Activated CD4-positive, alpha-beta T cell treated with anti-CD3 and anti-CD28 coated beads, Interleukin-2, amount 10 ng/mL, durations not matched to agents 7 days and 5 days (primary cell): ENCODE measurements at regions of chrX and their contacts with region 1.

Region 1: DNA sequence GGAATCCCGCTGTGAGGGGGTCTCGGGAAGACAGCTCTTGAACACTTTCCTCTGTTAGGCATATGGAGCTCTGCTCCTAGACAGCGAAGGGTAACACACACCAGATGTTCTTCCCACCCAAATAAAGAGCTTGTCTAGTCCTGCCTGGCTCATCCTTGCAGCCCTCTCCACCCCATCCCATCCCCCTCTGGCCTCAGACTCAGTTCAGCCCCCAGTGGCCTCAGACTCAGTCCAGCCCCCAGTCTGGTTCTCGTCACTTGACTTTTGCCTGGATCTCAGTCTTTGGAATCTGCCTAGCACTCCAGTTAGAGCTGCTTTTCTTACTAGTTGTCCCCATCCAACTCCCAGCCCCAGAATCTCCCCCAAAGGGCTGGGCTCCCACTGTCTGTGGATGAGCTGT is 14.9 kb downstream of the RAB33A start:
- DNase-seq: no peak
- H3K4me3 Mint-ChIP-seq: no peak overlapping the region
- H3K27ac Mint-ChIP-seq: peak overlapping the region; percentile 62
- H3K4me1 Mint-ChIP-seq: peaks cover 26% of the 10 kb centered on the region
- H3K27me3 Mint-ChIP-seq: no peaks in the 10 kb centered on the region

Region 2: DNA sequence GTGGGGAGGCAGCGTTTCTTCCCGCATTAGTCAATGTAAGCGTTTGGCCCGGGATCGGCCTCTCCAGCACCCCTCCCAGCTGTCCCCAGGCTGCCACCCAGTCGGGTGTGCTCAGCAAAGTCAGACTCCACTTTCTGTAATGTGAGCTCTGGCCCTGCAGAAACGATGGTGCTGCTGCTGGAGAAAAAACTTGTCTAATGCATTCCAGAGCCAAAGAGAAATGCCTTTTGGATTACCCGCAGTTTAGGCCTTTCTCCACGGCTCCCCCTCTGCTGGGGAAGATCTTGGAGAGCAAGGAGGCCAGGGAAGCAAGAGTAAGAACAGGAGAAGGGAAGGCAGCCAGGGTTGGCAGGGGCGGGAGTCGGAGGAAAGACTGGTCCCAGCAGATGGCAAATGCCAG is 131.5 kb before region 1 on chrX:
- CTCF ChIA-PET with region 1: no interaction called
- POLR2A ChIA-PET with region 1: no interaction called
- DNase-seq: no peak
- H3K4me3 Mint-ChIP-seq: no peak overlapping the region
- H3K27ac Mint-ChIP-seq: peak overlapping the region; percentile 79
- H3K4me1 Mint-ChIP-seq: peaks cover 3% of the 10 kb centered on the region
- H3K27me3 Mint-ChIP-seq: no peaks in the 10 kb centered on the region

Region 3: GRCh38 chrX:130079824-130080406 is 106.7 kb before region 1 on chrX:
- CTCF ChIA-PET with region 1: interaction called, 17 read pairs
- POLR2A ChIA-PET with region 1: no interaction called
- DNase-seq: peak; percentile 63
- H3K4me3 Mint-ChIP-seq: no peak overlapping the region
- H3K27ac Mint-ChIP-seq: peak overlapping the region; percentile 72
- H3K4me1 Mint-ChIP-seq: peaks cover 49% of the 10 kb centered on the region
- H3K27me3 Mint-ChIP-seq: no peaks in the 10 kb centered on the region

Region 4: GRCh38 chrX:130165181-130165702 is 21.4 kb before region 1 on chrX:
- CTCF ChIA-PET with region 1: interaction called, 3 read pairs
- POLR2A ChIA-PET with region 1: interaction called, 11 read pairs
- DNase-seq: no peak
- H3K4me3 Mint-ChIP-seq: peak overlapping the region; percentile 91
- H3K27ac Mint-ChIP-seq: peak overlapping the region; percentile 95
- H3K4me1 Mint-ChIP-seq: peaks cover 48% of the 10 kb centered on the region
- H3K27me3 Mint-ChIP-seq: no peaks in the 10 kb centered on the region

Region 5: GRCh38 chrX:130224518-130225209 is 38.0 kb after region 1 on chrX:
- CTCF ChIA-PET with region 1: no interaction called
- POLR2A ChIA-PET with region 1: no interaction called
- DNase-seq: no peak
- H3K4me3 Mint-ChIP-seq: no peak overlapping the region
- H3K27ac Mint-ChIP-seq: no peak overlapping the region
- H3K4me1 Mint-ChIP-seq: peaks cover 1% of the 10 kb centered on the region
- H3K27me3 Mint-ChIP-seq: no peaks in the 10 kb centered on the region